HCT116 (cell line): ENCODE measurements at regions of chr11 and their contacts with region 1.

Region 1: DNA sequence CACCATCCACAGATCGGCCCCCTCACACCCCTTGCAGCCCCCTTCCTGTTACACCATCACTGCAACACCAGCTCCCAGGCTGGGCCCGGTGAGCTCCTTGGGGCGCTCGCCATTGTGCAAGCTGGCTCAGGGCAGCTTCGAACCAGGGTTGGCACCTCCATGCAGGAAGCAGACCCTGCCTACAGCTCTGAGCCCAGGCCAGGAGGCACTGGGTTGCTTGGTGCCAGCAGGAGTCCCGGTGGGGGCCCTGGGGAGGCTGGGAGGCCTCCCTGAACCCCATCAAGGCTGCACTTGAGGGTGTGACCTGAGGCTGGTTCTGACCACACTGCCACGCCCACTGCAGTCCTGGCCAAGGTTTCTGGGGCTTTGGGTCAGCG is 417.1 kb downstream of the CTTN start:
- DNase-seq: no peak
- ATAC-seq: no peak
- H3K4me3 ChIP-seq: no peak overlapping the region
- H3K27ac ChIP-seq: no peak overlapping the region
- H3K4me1 ChIP-seq: no peaks in the 10 kb centered on the region
- H3K27me3 ChIP-seq: no peaks in the 10 kb centered on the region
- CTCF ChIP-seq: no peak
- POLR2A ChIP-seq: no peak
- RAD21 ChIP-seq: no peak

Region 2: DNA sequence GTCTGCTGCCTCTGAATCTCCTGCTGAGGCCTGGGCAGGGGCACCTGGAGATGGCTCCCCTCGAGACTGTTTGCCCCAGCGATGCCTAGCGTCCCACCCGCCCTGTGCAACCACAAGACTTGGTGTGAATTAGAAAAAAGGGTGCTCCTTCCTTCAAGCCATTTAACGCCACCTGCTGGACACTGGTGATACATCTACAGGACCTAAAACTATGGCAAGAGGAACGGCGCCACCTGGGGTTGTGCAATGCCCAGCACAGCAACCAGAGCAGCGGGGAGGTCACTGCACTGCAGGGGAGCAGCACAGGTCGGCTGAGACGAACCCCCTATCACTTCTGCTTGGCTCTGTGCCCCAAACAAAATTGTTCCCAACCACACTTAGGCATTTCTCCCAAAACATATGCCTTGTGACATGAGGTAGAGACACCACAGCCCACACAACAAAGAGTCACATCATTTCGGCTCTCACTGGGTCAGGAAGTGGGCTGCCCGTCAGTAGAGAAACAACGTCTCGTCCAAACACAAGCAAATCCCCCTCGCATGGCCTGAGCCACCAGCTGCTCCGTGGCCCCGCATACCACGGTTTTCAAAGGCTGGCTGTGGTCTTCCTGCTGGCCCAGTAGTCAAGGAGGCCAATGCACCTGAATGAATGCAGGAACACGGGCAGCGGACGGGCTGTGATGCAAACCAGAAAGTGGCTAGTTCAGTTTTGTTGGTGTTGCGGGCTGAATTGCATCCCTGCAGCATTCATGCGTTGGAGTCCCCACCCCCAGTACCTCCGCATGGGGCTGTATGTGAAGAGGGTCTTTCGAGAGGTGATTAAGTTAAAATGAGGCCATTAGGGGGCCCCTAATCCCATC is 265.0 kb after region 1 on chr11:
- CTCF ChIA-PET with region 1: no interaction called
- POLR2A ChIA-PET with region 1: no interaction called
- RAD21 ChIA-PET with region 1: interaction called in 1 of 2 experiments, 3 read pairs
- intact Hi-C with region 1: loop called (anchors 1 kb)
- DNase-seq: peak; percentile 79
- ATAC-seq: peak; percentile 97
- H3K4me3 ChIP-seq: no peak overlapping the region
- H3K27ac ChIP-seq: no peak overlapping the region
- H3K4me1 ChIP-seq: peaks cover 0 to 7% of the 10 kb centered on the region in 2 experiments; a peak in 1 of 4 replicates
- H3K27me3 ChIP-seq: no peaks in the 10 kb centered on the region
- CTCF ChIP-seq: peak; percentile 87 to 100 (median 92)
- POLR2A ChIP-seq: no peak
- RAD21 ChIP-seq: peak; percentile 89

Region 3: DNA sequence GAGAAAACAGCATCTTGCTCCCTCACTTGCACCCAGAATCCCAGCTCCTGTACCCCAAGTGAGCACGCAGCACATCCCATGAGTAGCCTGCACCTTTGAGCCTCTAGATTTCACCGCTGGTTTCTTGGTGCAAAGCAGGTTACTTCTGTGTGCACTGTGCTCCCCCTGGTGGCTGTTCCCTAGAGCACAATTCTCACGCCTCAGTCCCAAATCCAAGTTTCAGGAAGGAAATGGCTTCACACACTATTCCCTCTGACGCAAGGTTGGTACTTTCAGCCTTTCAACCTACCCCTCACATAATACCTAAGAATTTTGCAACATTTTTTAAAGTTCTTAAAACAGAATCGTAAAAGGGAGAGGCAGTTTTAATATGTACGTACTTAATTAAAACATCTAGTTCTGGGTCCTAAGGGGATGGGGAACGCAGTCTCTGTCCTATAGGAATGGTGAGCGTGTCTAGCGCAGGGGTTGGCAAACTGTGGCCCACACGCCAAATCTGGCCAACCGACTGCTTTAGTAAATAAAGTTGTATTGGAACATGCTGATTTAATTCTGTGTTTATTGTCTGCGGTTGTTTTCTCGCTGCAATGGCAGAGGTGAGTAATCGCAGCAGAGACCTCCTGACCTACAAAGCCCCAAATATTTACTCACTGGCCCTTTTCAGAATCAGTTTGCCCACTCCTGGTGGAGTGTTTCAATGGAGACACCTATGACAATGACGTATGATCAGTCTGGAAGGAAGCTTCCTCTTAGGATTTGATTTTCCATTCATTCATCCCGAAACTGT is 605.2 kb after region 1 on chr11:
- CTCF ChIA-PET with region 1: no interaction called
- POLR2A ChIA-PET with region 1: no interaction called
- RAD21 ChIA-PET with region 1: no interaction called
- intact Hi-C with region 1: loop called (anchors 2 kb)
- DNase-seq: peak; percentile 56
- ATAC-seq: peak; percentile 82
- H3K4me3 ChIP-seq: no peak overlapping the region
- H3K27ac ChIP-seq: no peak overlapping the region
- H3K4me1 ChIP-seq: peaks cover 0 to 5% of the 10 kb centered on the region in 2 experiments; a peak in 1 of 4 replicates
- H3K27me3 ChIP-seq: peaks cover 2% of the 10 kb centered on the region; the same call in 1 of the 2 replicates
- CTCF ChIP-seq: peak; percentile 84 to 92 (median 87)
- POLR2A ChIP-seq: no peak
- RAD21 ChIP-seq: peak; percentile 88